ENCODE measurements at regions of chr16 and their contacts with region 1.

Region 1: GRCh38 chr16:76818606-76819181 is 372.3 kb upstream of the MON1B start:
- DNase-seq: no peak
- ATAC-seq: no peak
- H3K4me3 ChIP-seq: no peak overlapping the region
- H3K27ac ChIP-seq: no peak overlapping the region
- H3K4me1 ChIP-seq: peaks cover 15% of the 10 kb centered on the region
- H3K27me3 ChIP-seq: no peaks in the 10 kb centered on the region
- CTCF ChIP-seq: no peak

Region 2: DNA sequence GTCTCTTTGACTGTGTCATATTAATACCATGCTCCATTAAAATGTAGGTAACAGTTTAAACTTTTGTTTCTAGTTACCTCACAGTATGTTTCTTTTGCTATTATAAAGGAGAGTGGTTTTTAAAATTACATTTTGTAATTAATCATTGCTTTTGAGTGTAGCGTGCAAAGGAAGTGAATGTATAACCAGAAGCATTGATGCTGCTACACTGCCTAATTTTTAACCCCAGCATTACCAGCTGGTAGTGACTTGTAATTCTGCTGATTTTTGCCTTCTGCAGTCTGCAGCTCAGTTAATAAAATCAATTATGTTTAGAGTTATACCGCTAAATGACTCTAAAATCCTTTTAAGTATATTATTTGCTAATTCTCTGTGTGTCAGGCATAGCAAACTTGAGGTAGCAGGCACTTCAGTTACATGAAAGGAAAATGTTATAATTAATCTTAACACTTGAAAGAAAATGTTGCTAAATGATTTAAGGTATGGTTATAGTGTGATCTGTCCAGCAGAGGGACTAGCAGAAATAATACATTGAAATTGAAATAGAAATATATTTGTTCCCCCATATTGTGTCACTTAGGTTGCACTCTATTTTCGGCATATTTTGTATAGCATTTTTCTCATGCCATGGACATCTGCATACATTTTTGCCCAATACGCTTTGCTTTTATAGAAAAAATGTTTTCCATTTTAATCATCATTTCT is 153.0 kb before region 1 on chr16:
- CTCF ChIA-PET with region 1: no interaction called
- POLR2A ChIA-PET with region 1: no interaction called
- intact Hi-C with region 1: loop called (anchors 1 kb)
- DNase-seq: peak; percentile 9
- ATAC-seq: no peak
- H3K4me3 ChIP-seq: no peak overlapping the region
- H3K27ac ChIP-seq: no peak overlapping the region
- H3K4me1 ChIP-seq: peaks cover 15% of the 10 kb centered on the region
- H3K27me3 ChIP-seq: peaks cover 11% of the 10 kb centered on the region; the same call in 1 of the 2 replicates
- CTCF ChIP-seq: peak; percentile 41; the same call in 1 of the 2 replicates

Region 3: DNA sequence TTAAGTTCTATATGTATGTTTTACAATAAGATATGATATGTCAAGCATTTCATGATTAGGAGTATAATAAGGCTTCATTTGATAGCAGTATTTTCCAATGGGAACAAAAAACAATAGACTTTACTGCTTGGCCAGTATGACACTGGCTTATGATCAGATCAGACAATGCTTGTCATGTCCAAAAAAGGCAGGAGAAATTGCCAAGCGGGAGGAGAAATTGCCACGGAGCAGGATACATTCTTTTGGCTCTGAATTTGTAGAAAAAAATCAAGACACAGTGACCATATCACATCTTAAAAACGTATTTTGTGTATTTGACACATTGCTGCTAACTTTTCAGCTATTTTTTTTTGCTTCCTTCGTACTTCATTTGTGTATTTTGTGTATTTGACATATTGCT is 137.4 kb before region 1 on chr16:
- CTCF ChIA-PET with region 1: no interaction called
- POLR2A ChIA-PET with region 1: no interaction called
- intact Hi-C with region 1: loop called (anchors 1 kb)
- DNase-seq: no peak
- ATAC-seq: no peak
- H3K4me3 ChIP-seq: no peak overlapping the region
- H3K27ac ChIP-seq: no peak overlapping the region
- H3K4me1 ChIP-seq: peaks cover 9% of the 10 kb centered on the region
- H3K27me3 ChIP-seq: no peaks in the 10 kb centered on the region
- CTCF ChIP-seq: no peak

Region 4: GRCh38 chr16:76756951-76757350 is 61.7 kb before region 1 on chr16:
- CTCF ChIA-PET with region 1: no interaction called
- POLR2A ChIA-PET with region 1: no interaction called
- intact Hi-C with region 1: loop called (anchors 2 kb)
- DNase-seq: peak; percentile 59
- ATAC-seq: peak; percentile 31; the same call in 1 of the 2 replicates
- H3K4me3 ChIP-seq: no peak overlapping the region
- H3K27ac ChIP-seq: peak overlapping the region; percentile 46
- H3K4me1 ChIP-seq: peaks cover 7% of the 10 kb centered on the region; the same call in 1 of the 2 replicates
- H3K27me3 ChIP-seq: no peaks in the 10 kb centered on the region
- CTCF ChIP-seq: no peak

Region 5: DNA sequence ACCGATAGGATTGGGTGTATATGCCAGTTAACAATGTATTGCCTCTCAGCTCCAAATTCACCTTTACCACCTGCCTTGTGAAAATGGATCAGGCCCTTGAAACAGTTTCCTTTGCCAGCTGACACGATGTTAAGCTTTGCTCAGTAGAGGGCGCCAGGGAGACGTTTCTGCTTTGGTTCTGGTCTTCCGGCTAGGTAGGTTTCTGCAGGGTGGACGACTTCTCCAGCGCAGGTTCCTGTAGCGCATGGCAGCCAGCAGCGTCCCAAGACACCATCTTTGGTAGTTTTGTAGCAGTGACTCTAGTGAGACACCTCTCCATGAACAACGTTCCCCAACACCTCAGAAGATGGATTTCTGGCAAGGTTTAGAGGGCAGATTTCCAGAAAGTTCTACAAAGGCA is 404.5 kb after region 1 on chr16:
- CTCF ChIA-PET with region 1: no interaction called
- POLR2A ChIA-PET with region 1: no interaction called
- intact Hi-C with region 1: no loop called
- DNase-seq: peak; percentile 8
- ATAC-seq: no peak
- H3K4me3 ChIP-seq: no peak overlapping the region
- H3K27ac ChIP-seq: no peak overlapping the region
- H3K4me1 ChIP-seq: peaks cover 19% of the 10 kb centered on the region
- H3K27me3 ChIP-seq: no peaks in the 10 kb centered on the region
- CTCF ChIP-seq: peak; percentile 48